GM12878 (cell line): ENCODE measurements at regions of chr6 and their contacts with region 1.

Region 1: GRCh38 chr6:107750176-107750797 is 73.8 kb downstream of the SCML4 start:
- DNase-seq: no peak
- ATAC-seq: no peak
- H3K4me3 ChIP-seq: no peak overlapping the region
- H3K27ac ChIP-seq: no peak overlapping the region
- H3K4me1 ChIP-seq: no peaks in the 10 kb centered on the region
- H3K27me3 ChIP-seq: peaks cover 0 to 4% of the 10 kb centered on the region in 2 experiments; a peak in 1 of 4 replicates
- CTCF ChIP-seq: no peak
- EP300 ChIP-seq: no peak
- POLR2A ChIP-seq: no peak
- RAD21 ChIP-seq: no peak

Region 2: DNA sequence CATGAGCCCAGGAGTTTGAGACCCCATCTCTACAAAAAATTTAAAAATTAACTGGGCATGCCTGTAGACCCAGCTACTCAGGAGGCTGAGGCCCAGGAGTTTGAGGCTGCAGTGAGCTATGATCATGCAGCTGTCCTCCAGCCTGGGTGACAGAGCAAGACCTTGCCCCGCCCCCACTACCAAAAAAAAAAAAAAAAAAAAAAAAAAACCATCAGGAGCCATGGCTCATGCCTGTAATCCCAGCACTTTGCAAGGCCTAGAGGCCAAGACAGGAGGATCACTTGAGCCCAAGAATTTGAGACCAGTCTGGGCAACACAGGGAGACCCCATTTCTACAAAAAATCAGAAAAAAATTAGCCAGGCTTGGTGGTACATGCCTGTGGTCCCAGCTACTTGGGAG is 101.3 kb before region 1 on chr6:
- CTCF ChIA-PET with region 1: no interaction called
- POLR2A ChIA-PET with region 1: interaction called, 11 read pairs
- RAD21 ChIA-PET with region 1: no interaction called
- SMC1A ChIA-PET with region 1: no interaction called
- in situ Hi-C with region 1: no loop called
- intact Hi-C with region 1: no loop called
- DNase-seq: no peak
- ATAC-seq: no peak
- H3K4me3 ChIP-seq: no peak overlapping the region
- H3K27ac ChIP-seq: no peak overlapping the region
- H3K4me1 ChIP-seq: no peaks in the 10 kb centered on the region
- H3K27me3 ChIP-seq: no peaks in the 10 kb centered on the region
- CTCF ChIP-seq: no peak
- EP300 ChIP-seq: no peak
- POLR2A ChIP-seq: no peak
- RAD21 ChIP-seq: no peak